Caco-2 (cell line): ENCODE measurements at regions of chr10 and their contacts with region 1.

Region 1: DNA sequence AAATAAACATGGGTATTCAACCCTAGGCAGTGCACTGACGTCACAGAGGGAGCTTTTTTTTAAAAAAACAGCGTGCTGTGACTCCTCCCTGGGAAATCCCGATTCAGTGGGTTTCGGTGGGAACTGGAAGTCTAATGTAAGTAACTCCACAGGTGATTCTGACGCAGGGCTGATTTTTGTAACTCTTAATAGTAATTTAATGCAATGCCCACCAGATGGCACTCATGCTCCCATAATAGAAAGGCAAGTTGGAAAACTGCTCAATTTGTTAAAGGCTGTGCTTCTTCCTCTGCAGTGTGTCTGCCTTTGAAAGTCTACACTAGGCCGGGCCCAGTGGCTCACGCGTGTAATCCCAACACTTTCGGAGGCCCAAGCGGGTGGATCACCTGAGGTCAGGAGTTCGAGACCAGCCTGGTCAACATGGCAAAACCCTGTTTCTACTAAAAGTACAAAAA is 10.9 kb upstream of the RSU1 start:
- DNase-seq: peak; percentile 66 to 75
- H3K4me3 ChIP-seq: no peak overlapping the region
- H3K4me3 Mint-ChIP-seq: no peak overlapping the region
- H3K27ac Mint-ChIP-seq: no peak overlapping the region
- H3K4me1 ChIP-seq: no peaks in the 10 kb centered on the region
- H3K4me1 Mint-ChIP-seq: no peaks in the 10 kb centered on the region
- H3K27me3 ChIP-seq: no peaks in the 10 kb centered on the region
- H3K27me3 Mint-ChIP-seq: peaks cover 3% of the 10 kb centered on the region
- CTCF ChIP-seq: peak; percentile 63 to 78

Region 2: DNA sequence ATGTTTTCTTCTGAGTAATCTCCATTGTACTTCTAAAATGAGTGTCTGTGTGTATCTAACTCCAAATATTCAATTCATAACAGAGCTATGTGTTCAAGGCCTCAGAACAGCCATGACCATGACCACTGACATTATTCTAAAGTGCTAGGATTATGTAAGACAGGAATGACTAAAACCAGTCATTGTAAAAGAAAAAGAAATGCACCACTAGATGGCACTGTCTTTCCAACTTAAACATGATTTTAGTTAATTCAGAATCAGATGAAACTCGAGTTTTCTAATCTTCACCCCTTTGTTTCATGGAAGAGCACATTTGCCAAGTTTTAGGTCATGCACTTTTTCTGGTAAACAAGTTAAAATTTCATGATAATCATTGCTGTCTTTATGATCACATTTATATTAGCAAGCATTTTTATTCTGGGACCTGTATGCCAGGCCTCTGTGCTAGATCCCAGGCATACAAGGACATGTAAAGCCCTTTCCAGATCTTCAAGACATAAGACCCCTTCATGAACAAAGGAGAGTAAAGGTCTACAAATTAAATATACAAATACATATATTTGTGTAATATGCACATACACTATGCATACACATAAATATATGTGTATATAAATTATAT is 15.2 kb after region 1 on chr10:
- CTCF ChIA-PET with region 1: no interaction called
- POLR2A ChIA-PET with region 1: no interaction called
- intact Hi-C with region 1: loop called (anchors 1 kb)
- DNase-seq: peak in 1 of 2 experiments; percentile 69
- H3K4me3 ChIP-seq: no peak overlapping the region
- H3K4me3 Mint-ChIP-seq: no peak overlapping the region
- H3K27ac Mint-ChIP-seq: no peak overlapping the region
- H3K4me1 ChIP-seq: no peaks in the 10 kb centered on the region
- H3K4me1 Mint-ChIP-seq: no peaks in the 10 kb centered on the region
- H3K27me3 ChIP-seq: no peaks in the 10 kb centered on the region; the same call in 1 of the 2 replicates
- H3K27me3 Mint-ChIP-seq: peaks cover 9% of the 10 kb centered on the region
- CTCF ChIP-seq: peak; percentile 58 to 81